Activated CD8-positive, alpha-beta T cell treated with anti-CD3 and anti-CD28 coated beads for 36 hours (primary cell): ENCODE measurements at regions of chr2 and their contacts with region 1.

Region 1: GRCh38 chr2:126971481-126972278 is 73.0 kb downstream of the TEX51 start:
- DNase-seq: peak; percentile 78
- ATAC-seq: peak; percentile 98
- H3K4me3 Mint-ChIP-seq: peak overlapping the region; percentile 44
- H3K27ac Mint-ChIP-seq: no peak overlapping the region
- H3K4me1 Mint-ChIP-seq: peaks cover 2% of the 10 kb centered on the region
- H3K27me3 Mint-ChIP-seq: peaks cover 30% of the 10 kb centered on the region
- CTCF ChIP-seq: peak; percentile 94

Region 2: DNA sequence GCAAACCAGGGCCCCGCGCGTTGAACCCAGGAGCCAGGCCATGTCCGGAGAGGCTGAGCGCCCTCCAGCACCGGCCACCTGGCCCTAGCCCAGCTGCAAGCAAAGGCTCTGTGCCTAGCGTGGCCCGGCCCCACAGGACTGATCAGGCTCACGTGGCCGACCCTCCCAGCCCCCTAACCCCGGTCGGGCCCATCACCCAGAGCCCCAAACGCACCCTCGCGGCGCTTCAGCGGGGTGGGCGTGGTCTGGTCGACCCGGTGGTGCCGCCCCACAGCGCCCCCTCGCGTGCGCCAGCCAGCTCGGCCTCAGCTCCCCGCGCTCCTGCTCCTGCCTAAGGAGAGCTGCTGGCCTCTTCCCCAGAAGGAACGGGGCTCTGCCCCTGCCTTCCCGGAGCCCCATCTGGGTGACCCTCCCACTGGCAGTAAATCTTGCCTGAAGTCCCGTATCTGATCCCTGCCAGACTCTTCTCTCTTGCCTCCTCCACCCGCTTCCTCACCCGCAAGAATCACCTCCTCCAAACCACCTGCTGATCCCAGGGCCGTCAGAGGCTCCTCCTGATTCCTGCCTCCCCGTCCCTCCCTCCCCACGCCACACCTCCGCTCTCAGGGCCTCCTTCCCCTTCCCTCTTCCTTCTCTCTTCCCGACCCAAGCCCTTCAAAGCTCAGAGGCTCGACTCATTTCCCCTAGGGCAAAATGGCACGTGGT is 85.3 kb before region 1 on chr2:
- CTCF ChIA-PET with region 1: interaction called, 22 read pairs
- POLR2A ChIA-PET with region 1: no interaction called
- intact Hi-C with region 1: no loop called
- DNase-seq: peak; percentile 76
- ATAC-seq: peak; percentile 95
- H3K4me3 Mint-ChIP-seq: no peak overlapping the region
- H3K27ac Mint-ChIP-seq: no peak overlapping the region
- H3K4me1 Mint-ChIP-seq: no peaks in the 10 kb centered on the region
- H3K27me3 Mint-ChIP-seq: peaks cover 13% of the 10 kb centered on the region
- CTCF ChIP-seq: peak; percentile 77

Region 3: GRCh38 chr2:126954831-126955230 is 16.8 kb before region 1 on chr2:
- CTCF ChIA-PET with region 1: interaction called, 22 read pairs
- POLR2A ChIA-PET with region 1: interaction called, 3 read pairs
- intact Hi-C with region 1: no loop called
- DNase-seq: no peak
- ATAC-seq: no peak
- H3K4me3 Mint-ChIP-seq: no peak overlapping the region
- H3K27ac Mint-ChIP-seq: no peak overlapping the region
- H3K4me1 Mint-ChIP-seq: peaks cover 3% of the 10 kb centered on the region
- H3K27me3 Mint-ChIP-seq: peaks cover 15% of the 10 kb centered on the region
- CTCF ChIP-seq: no peak